ENCODE measurements at regions of chr5 and their contacts with region 1.

Region 1: GRCh38 chr5:2207952-2208544 is 325.3 kb upstream of the IRX4 start:
- DNase-seq: peak; percentile 18
- ATAC-seq: peak; percentile 98
- H3K4me3 ChIP-seq: no peak overlapping the region
- H3K27ac ChIP-seq: no peak overlapping the region
- H3K4me1 ChIP-seq: no peaks in the 10 kb centered on the region
- H3K27me3 ChIP-seq: peaks cover 2 to 11% of the 10 kb centered on the region in 2 experiments; a peak in 3 of 5 replicates
- CTCF ChIP-seq: peak; percentile 71
- EP300 ChIP-seq: no peak
- POLR2A ChIP-seq: no peak
- RAD21 ChIP-seq: peak; percentile 64

Region 2: DNA sequence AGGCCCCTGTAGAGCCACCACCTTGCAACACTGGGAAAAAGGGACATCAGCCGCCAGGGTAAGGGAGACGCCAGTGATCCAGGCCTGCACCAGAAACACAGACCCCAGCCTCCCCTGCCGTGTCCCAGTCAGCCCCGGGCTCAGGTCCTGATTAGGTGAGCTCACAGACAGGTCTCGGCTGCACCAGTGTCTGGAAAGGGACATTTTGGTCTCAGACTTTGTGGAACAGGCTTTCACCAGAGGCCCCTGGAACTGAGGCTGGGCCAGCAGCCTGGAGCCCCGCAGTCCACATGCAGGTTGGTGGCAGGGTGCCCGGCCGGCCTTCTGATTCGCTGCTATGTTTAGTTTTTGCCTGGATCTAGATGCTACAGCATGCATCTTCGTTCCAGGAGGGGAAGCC is 43.7 kb after region 1 on chr5:
- CTCF ChIA-PET with region 1: no interaction called
- POLR2A ChIA-PET with region 1: no interaction called
- in situ Hi-C with region 1: no loop called
- intact Hi-C with region 1: loop called (anchors 2 kb)
- DNase-seq: no peak
- ATAC-seq: no peak
- H3K4me3 ChIP-seq: no peak overlapping the region
- H3K27ac ChIP-seq: no peak overlapping the region
- H3K4me1 ChIP-seq: no peaks in the 10 kb centered on the region
- H3K27me3 ChIP-seq: peaks cover 3 to 22% of the 10 kb centered on the region in 2 experiments; a peak in 3 of 5 replicates
- CTCF ChIP-seq: no peak
- EP300 ChIP-seq: no peak
- POLR2A ChIP-seq: no peak
- RAD21 ChIP-seq: no peak

Region 3: GRCh38 chr5:2739360-2740050 is 531.5 kb after region 1 on chr5:
- CTCF ChIA-PET with region 1: no interaction called
- POLR2A ChIA-PET with region 1: no interaction called
- in situ Hi-C with region 1: loop called (anchors 25 kb)
- intact Hi-C with region 1: no loop called
- DNase-seq: no peak
- ATAC-seq: peak; percentile 22; the same call in 2 of the 3 replicates
- H3K4me3 ChIP-seq: no peak overlapping the region
- H3K27ac ChIP-seq: no peak overlapping the region
- H3K4me1 ChIP-seq: no peaks in the 10 kb centered on the region
- H3K27me3 ChIP-seq: peaks cover 0 to 24% of the 10 kb centered on the region in 2 experiments; a peak in 3 of 5 replicates
- CTCF ChIP-seq: no peak
- EP300 ChIP-seq: no peak
- POLR2A ChIP-seq: no peak
- RAD21 ChIP-seq: no peak

Region 4: DNA sequence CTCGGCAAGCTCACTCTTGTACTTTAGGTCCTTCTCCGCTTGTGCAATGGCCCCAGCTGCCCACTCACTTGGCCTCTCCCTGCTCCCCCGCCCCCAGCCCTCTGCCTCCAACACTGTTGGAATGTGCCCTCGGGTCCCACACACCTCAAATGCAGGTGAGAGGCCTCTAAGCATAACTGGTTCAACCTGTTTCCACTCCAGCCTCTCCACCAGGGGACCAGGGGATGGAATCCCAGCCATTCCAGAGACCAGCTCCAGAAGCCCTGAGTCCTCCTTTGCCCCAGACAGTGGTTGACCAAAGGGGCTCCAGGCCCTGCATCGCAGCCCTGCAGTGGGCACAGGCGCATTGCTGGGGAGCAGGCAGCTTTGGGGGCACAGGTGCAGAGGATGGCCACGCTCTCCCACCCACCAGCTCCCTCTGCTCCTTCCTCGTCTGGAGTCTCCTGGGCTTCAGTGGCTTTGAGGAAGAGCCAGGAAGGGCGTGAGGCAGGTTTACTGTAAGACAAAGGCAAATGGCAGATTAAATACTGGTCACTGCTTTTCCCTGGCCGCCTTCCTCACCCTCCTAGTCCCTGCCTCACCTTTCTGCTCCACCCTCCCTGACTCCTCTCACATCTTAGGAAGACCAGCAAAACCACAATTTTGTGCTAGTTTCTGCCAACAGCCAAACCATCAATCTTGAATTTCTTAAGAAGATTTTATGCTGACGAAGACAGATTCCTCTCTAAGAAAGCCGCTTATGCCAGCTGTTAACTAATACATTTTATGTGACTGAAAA is 572.5 kb after region 1 on chr5:
- CTCF ChIA-PET with region 1: no interaction called
- POLR2A ChIA-PET with region 1: no interaction called
- in situ Hi-C with region 1: no loop called
- intact Hi-C with region 1: loop called (anchors 5 kb)
- DNase-seq: no peak
- ATAC-seq: no peak
- H3K4me3 ChIP-seq: no peak overlapping the region
- H3K27ac ChIP-seq: no peak overlapping the region
- H3K4me1 ChIP-seq: no peaks in the 10 kb centered on the region
- H3K27me3 ChIP-seq: peaks cover 0 to 12% of the 10 kb centered on the region in 2 experiments; a peak in 4 of 5 replicates
- CTCF ChIP-seq: no peak
- EP300 ChIP-seq: no peak
- POLR2A ChIP-seq: no peak
- RAD21 ChIP-seq: no peak

Region 5: GRCh38 chr5:3602785-3603502 is 1394.9 kb after region 1 on chr5:
- CTCF ChIA-PET with region 1: no interaction called
- POLR2A ChIA-PET with region 1: no interaction called
- in situ Hi-C with region 1: loop called (anchors 10 kb)
- intact Hi-C with region 1: loop called (anchors 5 kb)
- DNase-seq: peak; percentile 1
- ATAC-seq: peak; percentile 92
- H3K4me3 ChIP-seq: no peak overlapping the region
- H3K27ac ChIP-seq: no peak overlapping the region
- H3K4me1 ChIP-seq: no peaks in the 10 kb centered on the region
- H3K27me3 ChIP-seq: peaks cover 0 to 15% of the 10 kb centered on the region in 2 experiments; a peak in 3 of 5 replicates
- CTCF ChIP-seq: peak; percentile 75
- EP300 ChIP-seq: no peak
- POLR2A ChIP-seq: no peak
- RAD21 ChIP-seq: no peak; the same call in 1 of the 2 replicates

Measured in HepG2 (cell line).